ENCODE measurements at regions of chr4 and their contacts with region 1.

Region 1: GRCh38 chr4:37914539-37914938 is 23.7 kb downstream of the TBC1D1 start:
- DNase-seq: no peak

Region 2: GRCh38 chr4:37882665-37883296 is 31.8 kb before region 1 on chr4:
- intact Hi-C with region 1: no loop called
- DNase-seq: no peak

Region 3: DNA sequence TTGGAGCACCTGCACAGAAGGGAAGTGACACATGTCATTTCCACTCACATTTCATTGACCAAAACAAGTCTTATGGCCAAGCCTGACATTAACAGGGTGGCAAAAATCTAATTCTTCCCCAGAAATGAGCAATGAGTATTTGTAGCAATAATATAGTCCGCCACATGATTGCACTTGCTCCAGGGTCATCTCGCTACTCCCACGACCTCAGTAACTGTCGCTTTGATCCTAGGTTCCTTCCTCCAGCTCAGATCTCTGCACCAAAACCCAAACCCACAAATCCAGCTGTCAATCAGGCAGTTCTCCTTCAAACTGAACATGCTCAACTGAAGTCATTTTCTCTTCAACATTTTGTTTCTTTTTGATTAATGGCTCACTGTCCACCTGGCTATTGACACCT is 20.5 kb after region 1 on chr4:
- intact Hi-C with region 1: loop called (anchors 2 kb)
- DNase-seq: no peak

Region 4: GRCh38 chr4:38099908-38100407 is 185.4 kb after region 1 on chr4:
- intact Hi-C with region 1: no loop called
- DNase-seq: no peak